GM12878 (cell line): ENCODE measurements at regions of chr2 and their contacts with region 1.

Region 1: GRCh38 chr2:237558906-237559641 is 7.3 kb upstream of the PRLH start:
- DNase-seq: no peak
- ATAC-seq: no peak
- H3K4me3 ChIP-seq: no peak overlapping the region
- H3K27ac ChIP-seq: no peak overlapping the region
- H3K4me1 ChIP-seq: peaks cover 19% of the 10 kb centered on the region
- H3K27me3 ChIP-seq: no peaks in the 10 kb centered on the region
- CTCF ChIP-seq: no peak
- EP300 ChIP-seq: no peak
- POLR2A ChIP-seq: no peak
- RAD21 ChIP-seq: no peak

Region 2: GRCh38 chr2:237383991-237384671 is 174.9 kb before region 1 on chr2:
- CTCF ChIA-PET with region 1: no interaction called
- POLR2A ChIA-PET with region 1: no interaction called
- RAD21 ChIA-PET with region 1: no interaction called
- SMC1A ChIA-PET with region 1: no interaction called
- in situ Hi-C with region 1: no loop called
- intact Hi-C with region 1: no loop called
- DNase-seq: no peak
- ATAC-seq: no peak
- H3K4me3 ChIP-seq: no peak overlapping the region
- H3K27ac ChIP-seq: no peak overlapping the region
- H3K4me1 ChIP-seq: no peaks in the 10 kb centered on the region
- H3K27me3 ChIP-seq: peaks cover 0 to 3% of the 10 kb centered on the region in 2 experiments; a peak in 2 of 4 replicates
- CTCF ChIP-seq: no peak
- EP300 ChIP-seq: no peak
- POLR2A ChIP-seq: no peak
- RAD21 ChIP-seq: no peak

Region 3: DNA sequence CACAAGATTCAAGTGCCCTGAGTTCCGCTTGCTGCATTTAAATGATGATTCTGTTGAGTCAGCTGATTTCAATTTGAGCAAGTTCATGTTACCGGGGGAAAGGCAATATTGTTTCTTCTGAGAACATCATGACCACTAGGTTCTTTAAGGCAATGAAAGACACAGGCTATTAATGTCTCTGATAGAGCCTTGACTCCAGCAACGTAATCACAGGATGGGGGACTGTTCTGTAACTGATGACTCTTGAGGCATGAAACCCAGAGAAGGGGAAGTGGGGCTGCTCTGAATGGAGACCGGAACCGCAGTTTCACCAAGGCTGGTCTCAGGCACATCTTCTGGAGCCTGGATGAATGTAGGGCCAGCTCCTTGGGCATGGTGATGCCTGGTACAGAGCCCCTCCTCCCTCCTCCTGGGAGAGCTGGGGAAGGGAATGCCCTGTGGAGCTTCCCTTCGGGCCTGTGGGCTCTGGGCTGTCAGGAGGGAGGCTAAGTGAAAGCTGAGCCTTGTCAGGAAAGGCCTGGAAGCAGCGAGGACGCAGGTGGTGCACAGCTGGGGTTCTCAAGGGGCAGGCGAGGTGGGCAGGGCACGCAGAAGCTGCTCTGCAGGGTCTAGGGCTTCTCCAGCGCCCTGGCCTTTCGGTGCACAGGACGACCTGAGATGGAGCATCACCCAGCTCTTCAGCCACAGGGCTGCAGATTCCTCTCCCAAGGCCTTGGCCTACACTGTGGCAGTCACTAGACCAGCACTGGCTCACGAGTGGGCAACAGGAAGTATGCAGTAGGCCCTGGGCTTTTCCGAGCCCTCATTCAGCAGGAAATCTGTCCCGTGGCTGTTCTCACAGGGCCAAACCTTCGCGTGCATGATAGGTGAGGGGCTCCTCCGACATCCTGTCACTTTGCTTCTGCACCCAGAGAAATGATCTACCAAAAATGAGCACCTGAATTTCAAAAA is 29.3 kb before region 1 on chr2:
- CTCF ChIA-PET with region 1: interaction called, 4 read pairs
- POLR2A ChIA-PET with region 1: interaction called, 6 read pairs
- RAD21 ChIA-PET with region 1: interaction called, 8 read pairs
- SMC1A ChIA-PET with region 1: interaction called, 34 read pairs
- in situ Hi-C with region 1: no loop called
- intact Hi-C with region 1: loop called (anchors 2 kb)
- DNase-seq: peak; percentile 73
- ATAC-seq: peak; percentile 98
- H3K4me3 ChIP-seq: no peak overlapping the region
- H3K27ac ChIP-seq: 0 out of 2 replicates have a peak overlapping the region, but pooled peaks have one; percentile 13
- H3K4me1 ChIP-seq: peaks cover 21% of the 10 kb centered on the region
- H3K27me3 ChIP-seq: no peaks in the 10 kb centered on the region
- CTCF ChIP-seq: no peak
- EP300 ChIP-seq: peak in 1 of 2 experiments; percentile 37; a peak in 1 of 4 replicates
- POLR2A ChIP-seq: no peak
- RAD21 ChIP-seq: no peak

Region 4: GRCh38 chr2:237540823-237541222 is 18.3 kb before region 1 on chr2:
- CTCF ChIA-PET with region 1: interaction called, 4 read pairs
- POLR2A ChIA-PET with region 1: interaction called, 11 read pairs
- RAD21 ChIA-PET with region 1: interaction called, 3 read pairs
- SMC1A ChIA-PET with region 1: interaction called, 16 read pairs
- in situ Hi-C with region 1: no loop called
- intact Hi-C with region 1: no loop called
- DNase-seq: no peak
- ATAC-seq: peak; percentile 75
- H3K4me3 ChIP-seq: no peak overlapping the region
- H3K27ac ChIP-seq: no peak overlapping the region
- H3K4me1 ChIP-seq: peaks cover 6% of the 10 kb centered on the region; the same call in 1 of the 2 replicates
- H3K27me3 ChIP-seq: peaks cover 0 to 3% of the 10 kb centered on the region in 2 experiments; a peak in 1 of 4 replicates
- CTCF ChIP-seq: no peak
- EP300 ChIP-seq: no peak
- POLR2A ChIP-seq: no peak
- RAD21 ChIP-seq: no peak

Region 5: GRCh38 chr2:237639836-237640220 is 80.8 kb after region 1 on chr2:
- CTCF ChIA-PET with region 1: no interaction called
- POLR2A ChIA-PET with region 1: no interaction called
- RAD21 ChIA-PET with region 1: no interaction called
- SMC1A ChIA-PET with region 1: no interaction called
- in situ Hi-C with region 1: no loop called
- intact Hi-C with region 1: no loop called
- DNase-seq: no peak
- ATAC-seq: no peak
- H3K4me3 ChIP-seq: no peak overlapping the region
- H3K27ac ChIP-seq: no peak overlapping the region
- H3K4me1 ChIP-seq: no peaks in the 10 kb centered on the region
- H3K27me3 ChIP-seq: peaks cover 0 to 2% of the 10 kb centered on the region in 2 experiments; a peak in 3 of 4 replicates
- CTCF ChIP-seq: no peak
- EP300 ChIP-seq: no peak
- POLR2A ChIP-seq: no peak
- RAD21 ChIP-seq: no peak

Region 6: GRCh38 chr2:237943395-237944094 is 384.5 kb after region 1 on chr2:
- CTCF ChIA-PET with region 1: no interaction called
- POLR2A ChIA-PET with region 1: no interaction called
- RAD21 ChIA-PET with region 1: no interaction called
- SMC1A ChIA-PET with region 1: no interaction called
- in situ Hi-C with region 1: no loop called
- intact Hi-C with region 1: no loop called
- DNase-seq: no peak
- ATAC-seq: no peak
- H3K4me3 ChIP-seq: no peak overlapping the region
- H3K27ac ChIP-seq: no peak overlapping the region
- H3K4me1 ChIP-seq: no peaks in the 10 kb centered on the region
- H3K27me3 ChIP-seq: peaks cover 0 to 2% of the 10 kb centered on the region in 2 experiments; a peak in 1 of 4 replicates
- CTCF ChIP-seq: no peak
- EP300 ChIP-seq: no peak
- POLR2A ChIP-seq: no peak
- RAD21 ChIP-seq: no peak